Ascending aorta (tissue), 2 donors: ENCODE measurements at regions of chr10 and their contacts with region 1.

Region 1: GRCh38 chr10:93420091-93420490 is 62.0 kb downstream of the MYOF start:
- DNase-seq: no peak
- H3K4me3 ChIP-seq: no peak overlapping the region
- H3K27ac ChIP-seq: peak overlapping the region; percentile 72 to 82
- H3K4me1 ChIP-seq: peaks cover 18 to 33% of the 10 kb centered on the region in 2 donors
- H3K27me3 ChIP-seq: no peaks in the 10 kb centered on the region
- CTCF ChIP-seq: no peak

Region 2: GRCh38 chr10:93190372-93190771 is 229.7 kb before region 1 on chr10:
- intact Hi-C with region 1: no loop called
- DNase-seq: no peak
- H3K4me3 ChIP-seq: no peak overlapping the region
- H3K27ac ChIP-seq: no peak overlapping the region
- H3K4me1 ChIP-seq: peaks cover 3% of the 10 kb centered on the region in 2 donors
- H3K27me3 ChIP-seq: no peaks in the 10 kb centered on the region
- CTCF ChIP-seq: no peak

Region 3: GRCh38 chr10:93398528-93398927 is 21.6 kb before region 1 on chr10:
- intact Hi-C with region 1: loop called (anchors 2 kb)
- DNase-seq: no peak
- H3K4me3 ChIP-seq: no peak overlapping the region
- H3K27ac ChIP-seq: peak overlapping the region; percentile 41
- H3K4me1 ChIP-seq: peaks cover 0 to 3% of the 10 kb centered on the region in 2 donors
- H3K27me3 ChIP-seq: no peaks in the 10 kb centered on the region
- CTCF ChIP-seq: no peak